WTC11 (cell line): ENCODE measurements at regions of chr5 and their contacts with region 1.

Region 1: GRCh38 chr5:122156724-122157325 is 27.5 kb downstream of the ZNF474 start:
- DNase-seq: no peak
- ATAC-seq: peak; percentile 69
- H3K4me3 Mint-ChIP-seq: no peak overlapping the region
- H3K27ac Mint-ChIP-seq: no peak overlapping the region
- H3K4me1 Mint-ChIP-seq: no peaks in the 10 kb centered on the region
- H3K27me3 Mint-ChIP-seq: no peaks in the 10 kb centered on the region
- CTCF ChIP-seq: no peak

Region 2: DNA sequence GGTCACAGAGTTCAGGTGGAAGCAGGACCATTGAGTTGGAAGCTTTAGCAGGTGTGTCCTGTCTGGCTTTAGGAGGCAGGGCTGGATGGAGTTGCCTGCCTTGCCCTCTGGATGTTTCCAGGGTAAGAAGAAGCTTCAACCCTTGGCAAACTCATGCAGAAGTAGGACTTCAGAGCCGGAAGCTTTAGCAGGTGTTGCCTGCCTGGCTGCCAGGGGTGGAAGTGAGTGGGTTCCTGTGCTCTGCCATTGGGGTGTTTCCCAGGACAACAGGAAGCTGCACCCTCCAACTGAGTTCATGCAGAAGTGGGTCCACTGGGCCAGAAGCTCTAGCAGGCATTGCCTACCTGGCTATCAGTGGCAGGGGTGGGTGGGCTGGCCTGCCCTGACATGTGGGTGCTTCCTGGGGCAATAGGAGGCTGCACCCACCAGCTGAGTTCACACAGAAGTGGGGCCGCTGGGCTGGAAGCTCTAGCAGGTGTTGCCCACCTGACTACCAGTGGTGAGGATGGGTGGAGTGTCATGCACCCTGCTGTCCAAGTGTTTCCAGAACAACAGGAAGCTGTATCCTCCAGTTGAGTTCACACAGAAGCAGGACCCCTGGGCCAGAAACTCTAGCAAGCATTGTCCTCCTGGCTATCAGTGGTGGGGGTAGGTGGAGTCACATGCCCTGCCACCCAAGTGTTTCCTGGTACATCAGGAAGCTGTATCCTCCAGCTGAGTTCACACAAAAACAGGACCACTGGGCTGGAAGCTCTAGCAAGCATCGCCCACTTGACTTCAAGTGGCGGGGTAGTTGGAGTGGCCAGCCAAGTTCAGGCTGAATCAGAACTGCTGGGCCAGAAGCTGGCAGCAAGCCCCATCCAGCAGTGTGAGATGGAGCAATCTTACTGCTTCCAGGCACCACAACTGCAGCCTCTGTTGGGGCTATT is 103.4 kb before region 1 on chr5:
- CTCF ChIA-PET with region 1: no interaction called
- POLR2A ChIA-PET with region 1: no interaction called
- DNase-seq: no peak
- ATAC-seq: no peak
- H3K4me3 Mint-ChIP-seq: no peak overlapping the region
- H3K27ac Mint-ChIP-seq: no peak overlapping the region
- H3K4me1 Mint-ChIP-seq: no peaks in the 10 kb centered on the region
- H3K27me3 Mint-ChIP-seq: no peaks in the 10 kb centered on the region
- CTCF ChIP-seq: no peak

Region 3: DNA sequence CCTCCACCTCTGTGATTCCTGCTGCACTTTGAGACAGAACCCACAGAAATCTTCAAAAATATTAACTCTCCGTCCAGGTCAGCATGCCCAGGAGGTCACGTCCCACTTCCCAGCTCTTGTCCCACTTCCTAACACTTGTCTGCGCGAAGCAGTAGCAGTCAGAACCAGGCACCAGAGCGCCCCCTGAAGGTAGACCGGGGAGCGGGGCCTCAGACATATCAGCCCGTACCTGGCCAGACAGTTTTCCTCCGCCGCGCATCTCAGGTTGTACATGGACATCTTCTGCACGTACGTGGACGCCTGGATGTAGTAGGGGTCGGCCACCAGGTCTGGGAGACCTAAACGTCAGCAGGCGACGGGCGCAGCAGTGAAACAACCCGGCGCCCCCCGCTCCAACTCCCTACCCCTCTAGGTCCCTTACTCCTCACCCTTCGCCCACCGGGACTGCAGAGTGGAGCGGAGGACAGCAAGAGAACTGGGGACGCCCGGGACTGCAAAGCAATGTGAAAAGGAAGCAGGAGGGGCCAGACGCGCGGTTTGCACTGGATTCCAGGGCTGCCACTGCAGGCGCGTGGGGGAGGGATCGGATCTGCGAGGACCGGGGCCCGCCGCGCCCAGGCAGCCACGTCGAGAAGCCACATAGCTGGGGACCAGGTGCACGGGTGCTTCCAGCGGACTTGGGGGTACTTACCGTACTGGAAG is 80.0 kb before region 1 on chr5:
- CTCF ChIA-PET with region 1: interaction called, 13 read pairs
- POLR2A ChIA-PET with region 1: no interaction called
- DNase-seq: peak; percentile 94
- ATAC-seq: peak; percentile 81
- H3K4me3 Mint-ChIP-seq: peak overlapping the region; percentile 84
- H3K27ac Mint-ChIP-seq: no peak overlapping the region
- H3K4me1 Mint-ChIP-seq: peaks cover 24% of the 10 kb centered on the region
- H3K27me3 Mint-ChIP-seq: peaks cover 45% of the 10 kb centered on the region
- CTCF ChIP-seq: peak; percentile 82

Region 4: GRCh38 chr5:122091936-122092600 is 64.8 kb before region 1 on chr5:
- CTCF ChIA-PET with region 1: interaction called, 36 read pairs
- POLR2A ChIA-PET with region 1: no interaction called
- DNase-seq: no peak
- ATAC-seq: peak; percentile 76
- H3K4me3 Mint-ChIP-seq: no peak overlapping the region
- H3K27ac Mint-ChIP-seq: no peak overlapping the region
- H3K4me1 Mint-ChIP-seq: peaks cover 12% of the 10 kb centered on the region
- H3K27me3 Mint-ChIP-seq: no peaks in the 10 kb centered on the region
- CTCF ChIP-seq: peak; percentile 30; the same call in 1 of the 2 replicates

Region 5: GRCh38 chr5:122101636-122102285 is 55.1 kb before region 1 on chr5:
- CTCF ChIA-PET with region 1: interaction called, 28 read pairs
- POLR2A ChIA-PET with region 1: no interaction called
- DNase-seq: no peak
- ATAC-seq: peak; percentile 53
- H3K4me3 Mint-ChIP-seq: no peak overlapping the region
- H3K27ac Mint-ChIP-seq: no peak overlapping the region
- H3K4me1 Mint-ChIP-seq: peaks cover 24% of the 10 kb centered on the region
- H3K27me3 Mint-ChIP-seq: no peaks in the 10 kb centered on the region
- CTCF ChIP-seq: no peak

Region 6: DNA sequence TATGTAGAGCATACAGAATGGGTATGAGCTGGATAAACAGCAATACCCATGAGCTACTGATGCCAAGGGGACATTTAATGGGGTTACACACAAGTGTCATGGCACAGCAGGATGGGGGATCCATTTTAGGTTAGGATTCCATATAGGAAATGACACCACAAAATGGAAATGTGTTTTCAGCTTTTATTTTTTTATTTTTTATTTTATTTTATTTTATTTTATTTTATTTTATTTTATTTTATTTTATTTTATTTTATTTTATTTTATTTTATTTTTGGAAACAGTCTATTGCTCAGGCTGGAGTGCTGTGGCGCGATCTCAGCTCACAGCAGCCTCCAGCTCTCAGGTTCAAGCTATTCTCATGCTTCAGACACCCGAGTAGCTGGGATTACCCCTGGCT is 15.9 kb before region 1 on chr5:
- CTCF ChIA-PET with region 1: interaction called, 13 read pairs
- POLR2A ChIA-PET with region 1: no interaction called
- DNase-seq: no peak
- ATAC-seq: no peak
- H3K4me3 Mint-ChIP-seq: no peak overlapping the region
- H3K27ac Mint-ChIP-seq: no peak overlapping the region
- H3K4me1 Mint-ChIP-seq: peaks cover 2% of the 10 kb centered on the region; the same call in 1 of the 2 replicates
- H3K27me3 Mint-ChIP-seq: no peaks in the 10 kb centered on the region
- CTCF ChIP-seq: no peak

Region 7: DNA sequence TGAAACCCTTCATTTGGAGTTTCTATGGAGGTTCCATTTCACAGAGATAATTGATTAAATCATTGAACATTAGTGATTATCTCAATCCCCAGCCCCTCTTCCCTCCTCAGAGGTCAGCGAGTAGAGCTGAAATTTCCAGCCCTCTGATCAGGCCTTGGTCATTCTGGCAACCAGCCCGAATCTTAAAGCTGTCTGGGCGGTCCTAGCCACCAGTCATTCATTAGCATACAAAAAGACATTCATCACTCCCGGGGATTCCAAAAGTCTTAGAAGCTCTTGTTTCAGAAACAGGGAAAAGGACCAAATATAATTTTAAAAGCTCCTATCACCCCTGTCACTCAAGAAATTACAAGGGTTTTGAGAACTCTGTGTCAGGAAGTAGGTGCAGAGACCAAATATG is 13.8 kb after region 1 on chr5:
- CTCF ChIA-PET with region 1: interaction called, 24 read pairs
- POLR2A ChIA-PET with region 1: no interaction called
- DNase-seq: peak; percentile 36
- ATAC-seq: peak; percentile 98
- H3K4me3 Mint-ChIP-seq: no peak overlapping the region
- H3K27ac Mint-ChIP-seq: no peak overlapping the region
- H3K4me1 Mint-ChIP-seq: peaks cover 14% of the 10 kb centered on the region
- H3K27me3 Mint-ChIP-seq: no peaks in the 10 kb centered on the region
- CTCF ChIP-seq: no peak